B cell (primary cell): ENCODE measurements at regions of chr4 and their contacts with region 1.

Region 1: GRCh38 chr4:6974138-6974848 is 64.7 kb downstream of the TBC1D14 start:
- DNase-seq: peak; percentile 84
- ATAC-seq: peak; percentile 90
- H3K4me3 ChIP-seq: no peak overlapping the region
- H3K4me3 Mint-ChIP-seq: no peak overlapping the region
- H3K27ac ChIP-seq: no peak overlapping the region
- H3K27ac Mint-ChIP-seq: no peak overlapping the region
- H3K4me1 ChIP-seq: peaks cover 31 to 35% of the 10 kb centered on the region in 2 donors
- H3K4me1 Mint-ChIP-seq: peaks cover 33% of the 10 kb centered on the region
- H3K27me3 ChIP-seq: no peaks in the 10 kb centered on the region
- H3K27me3 Mint-ChIP-seq: no peaks in the 10 kb centered on the region
- CTCF ChIP-seq: peak; percentile 96

Region 2: GRCh38 chr4:6917461-6918271 is 56.6 kb before region 1 on chr4:
- CTCF ChIA-PET with region 1: interaction called, 9 read pairs
- POLR2A ChIA-PET with region 1: interaction called, 3 read pairs
- intact Hi-C with region 1: loop called (anchors 5 kb)
- DNase-seq: peak; percentile 80
- ATAC-seq: peak; percentile 90
- H3K4me3 ChIP-seq: peak overlapping the region in 2 of 5 experiments; percentile 3 to 34
- H3K4me3 Mint-ChIP-seq: peak overlapping the region; percentile 72
- H3K27ac ChIP-seq: peak overlapping the region; percentile 44 to 55
- H3K27ac Mint-ChIP-seq: peak overlapping the region; percentile 88
- H3K4me1 ChIP-seq: peaks cover 33 to 37% of the 10 kb centered on the region in 2 donors
- H3K4me1 Mint-ChIP-seq: peaks cover 39% of the 10 kb centered on the region
- H3K27me3 ChIP-seq: no peaks in the 10 kb centered on the region
- H3K27me3 Mint-ChIP-seq: no peaks in the 10 kb centered on the region
- CTCF ChIP-seq: peak; percentile 77

Region 3: GRCh38 chr4:6963139-6963611 is 11.1 kb before region 1 on chr4:
- CTCF ChIA-PET with region 1: interaction called, 21 read pairs
- POLR2A ChIA-PET with region 1: interaction called, 6 read pairs
- intact Hi-C with region 1: loop called (anchors 1 kb)
- DNase-seq: peak; percentile 49
- ATAC-seq: peak; percentile 32
- H3K4me3 ChIP-seq: peak overlapping the region in 1 of 5 experiments; percentile 71
- H3K4me3 Mint-ChIP-seq: peak overlapping the region; percentile 83
- H3K27ac ChIP-seq: peak overlapping the region; percentile 11 to 68
- H3K27ac Mint-ChIP-seq: peak overlapping the region; percentile 83
- H3K4me1 ChIP-seq: peaks cover 50 to 61% of the 10 kb centered on the region in 2 donors
- H3K4me1 Mint-ChIP-seq: peaks cover 58% of the 10 kb centered on the region
- H3K27me3 ChIP-seq: no peaks in the 10 kb centered on the region
- H3K27me3 Mint-ChIP-seq: no peaks in the 10 kb centered on the region
- CTCF ChIP-seq: no peak

Region 4: DNA sequence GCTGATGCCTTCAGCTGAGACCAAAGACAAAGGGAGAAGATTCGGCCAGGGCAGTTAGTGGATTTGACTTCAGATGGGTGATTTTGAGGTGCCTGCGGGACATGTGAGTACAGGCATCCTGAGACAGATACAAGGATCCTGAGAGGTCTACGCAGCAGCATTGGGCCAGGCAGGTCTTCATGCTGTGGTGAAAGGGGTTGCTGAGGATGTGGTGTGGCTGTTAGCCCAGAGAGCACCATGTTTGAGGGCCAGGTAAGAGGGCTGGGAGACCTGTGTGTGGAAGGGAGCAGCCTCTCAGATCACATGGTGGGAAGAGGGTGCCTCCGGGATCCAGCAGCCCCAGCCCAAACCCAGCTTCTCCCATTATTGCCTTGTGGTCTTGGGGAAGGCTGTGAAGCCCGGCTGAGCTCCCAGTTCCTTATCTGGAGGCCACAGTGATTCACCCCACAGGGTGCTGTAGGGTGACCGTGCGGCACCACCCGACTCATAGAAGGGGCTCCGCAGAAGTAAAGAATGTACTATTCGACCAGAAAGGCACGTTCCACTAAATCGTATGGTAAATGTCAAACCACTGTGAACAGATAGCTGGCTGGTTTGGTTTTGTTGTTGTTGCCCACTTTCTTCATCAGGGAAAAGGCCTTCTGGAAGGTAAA is 41.2 kb after region 1 on chr4:
- CTCF ChIA-PET with region 1: interaction called, 4 read pairs
- POLR2A ChIA-PET with region 1: no interaction called
- intact Hi-C with region 1: loop called (anchors 5 kb)
- DNase-seq: no peak
- ATAC-seq: no peak
- H3K4me3 ChIP-seq: no peak overlapping the region
- H3K4me3 Mint-ChIP-seq: no peak overlapping the region
- H3K27ac ChIP-seq: no peak overlapping the region
- H3K27ac Mint-ChIP-seq: peak overlapping the region; percentile 56
- H3K4me1 ChIP-seq: peaks cover 13 to 18% of the 10 kb centered on the region in 2 donors
- H3K4me1 Mint-ChIP-seq: peaks cover 23% of the 10 kb centered on the region
- H3K27me3 ChIP-seq: no peaks in the 10 kb centered on the region
- H3K27me3 Mint-ChIP-seq: no peaks in the 10 kb centered on the region
- CTCF ChIP-seq: no peak